ENCODE measurements at regions of chr18 and their contacts with region 1.

Region 1: DNA sequence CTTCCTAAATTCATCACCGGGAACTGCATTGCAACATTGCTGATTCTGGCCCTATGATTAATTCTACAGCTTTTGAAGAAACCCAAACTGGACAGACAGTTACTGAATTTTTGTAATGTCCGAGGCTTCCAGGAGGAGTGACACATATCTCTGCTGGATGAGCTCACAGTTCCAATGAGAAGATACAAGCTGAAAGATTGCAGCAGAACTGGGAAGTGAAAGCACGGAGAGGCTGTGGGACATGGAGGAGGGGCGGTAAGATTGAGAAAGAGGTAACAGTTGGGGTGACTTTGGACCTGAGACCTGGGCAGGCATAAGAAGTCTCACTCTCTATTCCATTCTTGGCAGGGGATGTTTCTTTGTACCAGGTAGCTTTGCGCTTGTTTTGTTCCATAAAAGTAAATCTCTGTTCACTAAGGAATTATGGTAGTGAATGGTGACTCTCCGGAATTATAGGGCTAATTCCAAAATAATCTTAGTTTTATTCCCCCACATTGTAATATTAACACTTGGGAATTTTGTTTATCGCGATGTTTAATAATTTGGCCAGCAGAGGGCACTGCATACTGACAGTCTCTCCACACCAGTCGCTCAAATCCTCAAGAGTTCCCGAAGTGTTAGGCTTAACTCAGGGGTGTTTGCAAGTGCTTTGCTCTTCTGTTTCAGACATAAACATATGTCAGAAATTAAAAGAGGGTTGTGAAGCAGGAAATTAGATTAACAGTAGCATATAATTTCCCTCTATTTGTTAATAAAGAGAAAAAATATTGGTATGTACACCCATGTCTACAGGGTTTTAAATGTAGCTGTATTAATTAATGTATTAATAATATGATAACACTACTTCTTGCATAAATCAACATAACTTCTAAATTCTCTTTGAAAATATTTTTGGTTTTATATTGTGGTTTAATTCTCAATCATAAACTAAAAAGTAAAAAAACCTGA is 201.4 kb downstream of the SOCS6 start:
- DNase-seq: peak in 4 of 10 donors; percentile 25 to 49 (median 38)

Region 2: GRCh38 chr18:70464343-70465114 is 25.7 kb before region 1 on chr18:
- intact Hi-C with region 1: loop called (anchors 1 kb)
- DNase-seq: peak; percentile 72 to 98 (median 87)